ENCODE measurements at regions of chr10 and their contacts with region 1.

Region 1: DNA sequence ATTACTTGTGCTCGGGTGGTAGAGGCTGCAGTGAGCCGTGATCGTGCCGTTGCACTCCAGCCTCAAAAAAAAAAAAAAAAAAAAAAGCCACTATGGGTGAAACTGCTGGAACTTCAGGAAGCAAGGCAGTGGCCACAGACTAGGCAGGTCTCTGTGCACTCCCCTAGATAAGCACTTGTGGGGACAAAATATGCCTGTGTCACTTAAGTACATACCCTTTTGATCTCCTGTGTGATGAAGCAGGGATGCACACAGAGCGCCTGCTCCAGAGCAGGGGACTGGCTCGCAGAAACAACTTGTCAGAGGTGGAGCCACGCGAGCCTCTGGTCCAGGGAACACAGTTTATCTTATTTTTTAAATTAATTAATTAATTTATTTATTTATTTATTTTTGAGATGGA is 42.9 kb upstream of the PSAP start:
- DNase-seq: no peak
- ATAC-seq: no peak
- H3K4me3 ChIP-seq: no peak overlapping the region
- H3K4me3 Mint-ChIP-seq: no peak overlapping the region
- H3K27ac ChIP-seq: no peak overlapping the region
- H3K27ac Mint-ChIP-seq: no peak overlapping the region
- H3K4me1 ChIP-seq: peaks cover 16 to 17% of the 10 kb centered on the region in 2 donors
- H3K4me1 Mint-ChIP-seq: peaks cover 20% of the 10 kb centered on the region
- H3K27me3 ChIP-seq: no peaks in the 10 kb centered on the region
- H3K27me3 Mint-ChIP-seq: no peaks in the 10 kb centered on the region
- CTCF ChIP-seq: no peak

Region 2: GRCh38 chr10:71319042-71319799 is 574.7 kb before region 1 on chr10 and contains the start of gene SLC29A3:
- CTCF ChIA-PET with region 1: interaction called, 18 read pairs
- POLR2A ChIA-PET with region 1: no interaction called
- intact Hi-C with region 1: loop called (anchors 1 kb)
- DNase-seq: peak; percentile 88
- ATAC-seq: peak; percentile 90
- H3K4me3 ChIP-seq: peak within 1 kb of the TSS; percentile 34 to 84 (median 78)
- H3K4me3 Mint-ChIP-seq: peak within 1 kb of the TSS; percentile 99
- H3K27ac ChIP-seq: peak within 1 kb of the TSS in 1 of 2 donors; percentile 72
- H3K27ac Mint-ChIP-seq: peak within 1 kb of the TSS; percentile 94
- H3K4me1 ChIP-seq: peaks cover 8 to 18% of the 10 kb centered on the region in 2 donors
- H3K4me1 Mint-ChIP-seq: peaks cover 17% of the 10 kb centered on the region
- H3K27me3 ChIP-seq: no peaks in the 10 kb centered on the region
- H3K27me3 Mint-ChIP-seq: no peaks in the 10 kb centered on the region
- CTCF ChIP-seq: peak; percentile 71
- total RNA-seq, gene SLC29A3: 6.7 and 8.2 TPM in 2 replicates

Region 3: DNA sequence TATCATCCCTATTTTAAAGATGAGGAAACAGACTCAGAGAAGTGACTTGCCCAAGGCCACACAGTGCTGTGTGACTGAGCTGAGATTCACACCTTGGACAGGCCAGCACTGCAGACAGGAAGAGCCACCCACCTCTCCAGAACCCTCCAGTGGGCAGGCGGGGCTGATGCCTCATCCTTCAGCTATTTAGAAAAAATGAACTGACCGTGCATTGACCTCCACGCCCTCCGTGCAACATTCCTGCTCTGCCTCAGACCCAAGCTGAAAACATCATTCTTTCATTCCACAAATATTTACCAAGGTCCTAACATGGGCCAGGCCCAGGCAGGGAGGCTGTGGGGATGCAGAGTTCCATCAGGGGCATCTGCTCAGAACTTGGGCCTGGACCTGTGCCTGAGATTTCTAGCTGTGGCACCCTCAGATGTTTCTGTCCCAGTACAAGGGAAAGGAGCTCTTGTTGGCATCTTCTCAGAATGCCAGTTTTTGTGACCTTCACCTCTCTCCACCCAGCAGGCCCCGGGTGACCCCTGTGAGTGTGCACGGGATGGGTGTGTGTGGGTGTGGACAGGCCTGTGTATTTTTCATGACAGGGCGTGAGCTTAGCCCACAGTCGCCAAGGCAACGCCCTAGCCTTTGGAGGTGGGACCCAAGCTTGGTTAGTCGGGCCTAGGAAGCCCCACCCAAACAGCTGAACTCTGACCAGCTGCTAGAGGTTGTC is 127.1 kb before region 1 on chr10:
- CTCF ChIA-PET with region 1: interaction called, 11 read pairs
- POLR2A ChIA-PET with region 1: no interaction called
- intact Hi-C with region 1: loop called (anchors 2 kb)
- DNase-seq: peak; percentile 74
- ATAC-seq: peak; percentile 50
- H3K4me3 ChIP-seq: peak overlapping the region in 1 of 5 experiments; percentile 42
- H3K4me3 Mint-ChIP-seq: peak overlapping the region; percentile 84
- H3K27ac ChIP-seq: peak overlapping the region; percentile 88 to 95
- H3K27ac Mint-ChIP-seq: peak overlapping the region; percentile 99
- H3K4me1 ChIP-seq: peaks cover 54 to 93% of the 10 kb centered on the region in 2 donors
- H3K4me1 Mint-ChIP-seq: peaks cover 87% of the 10 kb centered on the region
- H3K27me3 ChIP-seq: no peaks in the 10 kb centered on the region
- H3K27me3 Mint-ChIP-seq: no peaks in the 10 kb centered on the region
- CTCF ChIP-seq: no peak

Region 4: DNA sequence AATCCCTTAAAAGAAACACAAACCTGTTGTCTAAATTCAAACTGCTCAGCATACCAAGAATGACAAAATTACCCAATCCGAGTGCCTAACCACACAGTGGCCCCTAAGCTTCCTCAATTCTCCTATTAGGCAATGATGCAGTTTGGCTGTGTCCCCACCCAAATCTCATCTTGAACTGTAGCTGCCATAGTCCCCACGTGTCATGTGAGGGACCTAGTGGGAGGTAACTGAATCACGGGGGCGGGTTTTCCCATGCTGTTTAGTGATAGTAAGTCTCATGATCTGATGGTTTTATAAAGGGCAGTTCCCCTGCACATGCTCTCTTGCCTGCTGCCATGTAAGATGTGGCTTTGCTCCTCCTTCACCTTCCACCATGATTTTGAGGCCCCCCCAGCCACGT is 64.7 kb before region 1 on chr10:
- CTCF ChIA-PET with region 1: interaction called, 236 read pairs
- POLR2A ChIA-PET with region 1: interaction called, 4 read pairs
- intact Hi-C with region 1: no loop called
- DNase-seq: no peak
- ATAC-seq: no peak
- H3K4me3 ChIP-seq: no peak overlapping the region
- H3K4me3 Mint-ChIP-seq: no peak overlapping the region
- H3K27ac ChIP-seq: no peak overlapping the region
- H3K27ac Mint-ChIP-seq: peak overlapping the region; percentile 55
- H3K4me1 ChIP-seq: peaks cover 21 to 25% of the 10 kb centered on the region in 2 donors
- H3K4me1 Mint-ChIP-seq: peaks cover 32% of the 10 kb centered on the region
- H3K27me3 ChIP-seq: no peaks in the 10 kb centered on the region
- H3K27me3 Mint-ChIP-seq: no peaks in the 10 kb centered on the region
- CTCF ChIP-seq: no peak

Region 5: GRCh38 chr10:71873582-71874211 is 20.2 kb before region 1 on chr10:
- CTCF ChIA-PET with region 1: interaction called, 22 read pairs
- POLR2A ChIA-PET with region 1: interaction called, 3 read pairs
- intact Hi-C with region 1: loop called (anchors 1 kb)
- DNase-seq: peak; percentile 41
- ATAC-seq: peak; percentile 58
- H3K4me3 ChIP-seq: no peak overlapping the region
- H3K4me3 Mint-ChIP-seq: peak overlapping the region; percentile 11
- H3K27ac ChIP-seq: peak overlapping the region; percentile 26 to 63
- H3K27ac Mint-ChIP-seq: peak overlapping the region; percentile 70
- H3K4me1 ChIP-seq: peaks cover 24 to 47% of the 10 kb centered on the region in 2 donors
- H3K4me1 Mint-ChIP-seq: peaks cover 40% of the 10 kb centered on the region
- H3K27me3 ChIP-seq: no peaks in the 10 kb centered on the region
- H3K27me3 Mint-ChIP-seq: no peaks in the 10 kb centered on the region
- CTCF ChIP-seq: no peak

Region 6: GRCh38 chr10:72331601-72332422 is 437.9 kb after region 1 on chr10:
- CTCF ChIA-PET with region 1: interaction called, 41 read pairs
- POLR2A ChIA-PET with region 1: no interaction called
- intact Hi-C with region 1: no loop called
- DNase-seq: peak; percentile 93
- ATAC-seq: peak; percentile 79
- H3K4me3 ChIP-seq: peak overlapping the region in 4 of 5 experiments; percentile 31 to 38 (median 35)
- H3K4me3 Mint-ChIP-seq: peak overlapping the region; percentile 76
- H3K27ac ChIP-seq: peak overlapping the region; percentile 83 to 86
- H3K27ac Mint-ChIP-seq: peak overlapping the region; percentile 96
- H3K4me1 ChIP-seq: peaks cover 84 to 100% of the 10 kb centered on the region in 2 donors
- H3K4me1 Mint-ChIP-seq: peaks cover 90% of the 10 kb centered on the region
- H3K27me3 ChIP-seq: no peaks in the 10 kb centered on the region
- H3K27me3 Mint-ChIP-seq: no peaks in the 10 kb centered on the region
- CTCF ChIP-seq: peak; percentile 55

Measured in B cell (primary cell).